Endothelial cell of umbilical vein (primary cell): ENCODE measurements at regions of chr7 and their contacts with region 1.

Region 1: GRCh38 chr7:98119256-98119918 is 12.7 kb downstream of the LMTK2 start:
- DNase-seq: no peak
- H3K4me3 ChIP-seq: no peak overlapping the region
- H3K27ac ChIP-seq: no peak overlapping the region
- H3K4me1 ChIP-seq: peaks cover 3% of the 10 kb centered on the region
- H3K27me3 ChIP-seq: no peaks in the 10 kb centered on the region
- CTCF ChIP-seq: no peak
- POLR2A ChIP-seq: no peak

Region 2: DNA sequence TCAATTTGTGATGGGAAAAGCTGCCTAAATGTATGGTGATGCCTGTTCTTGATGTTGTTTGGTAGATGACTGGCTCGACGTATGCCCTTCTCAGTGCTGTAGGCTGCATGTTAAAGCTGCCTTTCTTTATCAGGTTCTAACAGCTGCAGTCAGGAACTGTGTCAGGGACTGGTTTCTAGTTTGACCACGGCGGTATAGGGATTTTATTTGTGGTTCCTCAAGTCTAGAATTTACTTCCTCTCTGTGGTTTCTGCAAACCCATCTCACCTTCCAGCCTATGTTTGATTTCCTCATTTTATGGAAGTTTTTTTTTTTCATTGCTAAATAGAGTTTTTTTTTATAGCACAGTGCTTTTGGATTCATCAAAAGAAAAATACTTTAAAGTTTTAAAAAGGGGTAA is 13.8 kb after region 1 on chr7:
- CTCF ChIA-PET with region 1: interaction called, 46 read pairs
- POLR2A ChIA-PET with region 1: interaction called, 3 read pairs
- dilution Hi-C with region 1: no loop called
- intact Hi-C with region 1: no loop called
- DNase-seq: no peak
- H3K4me3 ChIP-seq: no peak overlapping the region
- H3K27ac ChIP-seq: no peak overlapping the region
- H3K4me1 ChIP-seq: peaks cover 30% of the 10 kb centered on the region
- H3K27me3 ChIP-seq: no peaks in the 10 kb centered on the region
- CTCF ChIP-seq: no peak
- POLR2A ChIP-seq: no peak

Region 3: GRCh38 chr7:98531717-98532116 is 412.3 kb after region 1 on chr7:
- CTCF ChIA-PET with region 1: no interaction called
- POLR2A ChIA-PET with region 1: no interaction called
- dilution Hi-C with region 1: no loop called
- intact Hi-C with region 1: no loop called
- DNase-seq: no peak
- H3K4me3 ChIP-seq: no peak overlapping the region
- H3K27ac ChIP-seq: no peak overlapping the region
- H3K4me1 ChIP-seq: no peaks in the 10 kb centered on the region
- H3K27me3 ChIP-seq: no peaks in the 10 kb centered on the region
- CTCF ChIP-seq: no peak
- POLR2A ChIP-seq: no peak